ENCODE measurements at regions of chr2 and their contacts with region 1.

Region 1: DNA sequence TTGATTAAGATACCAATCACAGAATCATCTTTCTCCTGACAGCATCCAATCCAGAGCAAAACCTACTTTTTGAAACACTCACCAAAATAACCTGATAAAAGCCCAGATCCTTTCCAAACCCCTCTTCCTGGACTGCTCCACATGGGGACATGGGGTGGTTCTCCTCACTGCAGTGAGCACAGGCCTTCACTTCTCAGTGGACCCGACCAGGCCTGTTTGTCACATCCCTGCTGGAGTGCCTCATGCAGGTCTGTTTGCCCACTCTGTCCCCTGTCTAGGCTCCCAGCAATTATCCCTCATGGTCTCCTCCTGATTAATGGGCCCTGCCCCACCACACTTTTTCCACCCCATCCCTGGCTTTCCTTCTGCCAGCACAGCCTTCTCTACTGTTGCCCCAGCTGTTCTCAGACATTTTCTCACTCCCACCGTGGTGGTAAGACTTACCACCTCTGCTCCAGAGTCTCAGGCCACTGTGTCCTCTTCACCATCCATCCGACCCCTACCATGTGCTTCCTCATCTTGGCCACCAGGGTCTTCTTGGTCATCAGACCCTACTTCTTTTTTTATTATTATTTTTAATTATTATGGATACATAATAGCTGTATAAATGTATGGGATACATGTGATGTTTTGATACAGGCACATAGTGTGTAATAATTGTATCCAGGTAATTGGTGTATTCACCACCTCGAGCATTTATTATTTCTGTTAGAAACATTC is 21.1 kb downstream of the MRPL30 start:
- DNase-seq: no peak

Region 2: GRCh38 chr2:99066075-99066958 is 135.8 kb before region 1 on chr2:
- intact Hi-C with region 1: no loop called
- DNase-seq: no peak

Region 3: DNA sequence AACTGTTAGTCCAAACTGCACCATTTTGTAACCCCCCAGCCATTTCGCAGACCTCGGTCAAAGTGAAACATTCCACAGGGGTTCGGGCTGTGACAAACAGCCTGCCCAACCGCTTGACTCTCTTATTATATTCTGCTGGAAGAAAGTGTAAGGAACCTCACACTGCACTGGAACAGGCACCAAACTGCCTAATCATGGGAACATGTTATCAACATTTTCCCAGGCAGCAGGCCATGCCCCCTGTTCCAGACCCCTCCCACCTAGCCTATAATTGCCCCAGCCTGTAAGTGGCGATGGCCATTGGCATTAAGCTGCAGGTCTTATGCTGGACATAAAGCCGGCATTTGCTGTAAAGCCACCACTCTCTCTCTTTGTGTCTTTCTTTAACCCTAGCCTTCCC is 36.5 kb after region 1 on chr2:
- intact Hi-C with region 1: loop called in 1 of 2 experiments (anchors 1 kb)
- DNase-seq: no peak

Region 4: DNA sequence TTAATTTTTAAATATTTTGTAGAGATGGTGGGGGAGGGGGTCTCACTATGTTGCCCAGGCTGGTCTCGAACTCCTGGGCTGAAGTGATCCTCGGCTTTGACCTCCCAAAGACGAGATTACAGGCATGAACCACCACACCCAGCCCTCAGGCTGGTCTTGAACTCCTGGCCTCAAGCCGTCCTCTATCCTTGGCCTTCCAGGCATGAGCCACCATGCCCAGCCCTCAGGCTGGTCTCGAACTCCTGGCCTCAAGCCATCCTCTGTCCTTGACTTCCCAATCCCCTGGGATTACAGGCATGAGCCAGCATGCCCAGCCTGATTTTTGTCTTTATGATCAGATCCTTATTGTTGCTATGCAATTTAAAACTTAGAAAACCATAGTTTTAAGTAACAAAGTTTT is 109.3 kb after region 1 on chr2:
- intact Hi-C with region 1: loop called in 1 of 2 experiments (anchors 5 kb)
- DNase-seq: no peak

Measured in posterior vena cava (tissue), 2 donors.